ENCODE measurements at regions of chr2 and their contacts with region 1.

Region 1: GRCh38 chr2:186589612-186590349 is at the start of gene ITGAV:
- DNase-seq: peak; percentile 92
- ATAC-seq: peak; percentile 96
- H3K4me3 Mint-ChIP-seq: peak within 1 kb of the TSS; percentile 77
- H3K27ac Mint-ChIP-seq: peak within 1 kb of the TSS; percentile 82
- H3K4me1 Mint-ChIP-seq: peaks cover 31% of the 10 kb centered on the region
- H3K27me3 Mint-ChIP-seq: peaks cover 3% of the 10 kb centered on the region
- total RNA-seq, gene ITGAV: 5.1 to 6.0 TPM

Region 2: DNA sequence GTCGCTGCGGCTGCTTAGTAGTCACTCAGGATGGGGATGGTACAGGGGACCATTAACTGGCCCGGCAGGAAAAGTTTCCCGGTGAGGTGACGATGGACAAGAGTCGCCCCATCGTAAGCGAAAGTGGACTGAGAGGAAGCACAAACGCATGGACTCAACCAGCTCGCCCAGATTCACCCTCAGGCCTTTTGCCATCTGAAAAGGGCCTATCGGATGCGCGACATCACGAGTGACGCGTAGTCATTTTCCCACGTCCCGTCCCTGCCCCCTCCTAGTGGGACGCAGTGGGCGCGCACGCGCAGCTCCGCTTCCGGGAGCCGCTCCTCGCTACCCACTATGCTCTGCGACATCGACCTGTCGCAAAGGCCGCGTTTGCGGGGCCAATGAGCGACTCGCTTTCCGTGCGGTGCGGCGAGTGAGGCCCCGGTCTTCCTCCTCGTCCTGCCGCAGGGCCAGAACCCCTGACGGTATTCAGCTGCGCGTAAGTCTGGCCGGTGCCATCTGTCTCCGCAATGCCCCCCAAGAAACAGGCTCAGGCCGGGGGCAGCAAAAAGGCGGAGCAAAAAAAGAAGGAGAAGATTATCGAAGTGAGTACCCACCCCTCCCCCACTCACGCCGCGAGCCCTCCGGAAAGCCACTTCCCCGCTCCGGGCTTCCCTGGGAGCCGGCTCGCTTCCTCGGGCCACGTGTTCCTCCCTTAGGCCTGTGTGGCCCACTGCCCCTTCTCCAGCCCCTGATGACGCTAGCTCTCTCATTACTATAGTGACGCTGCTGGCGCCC is 103.7 kb before region 1 on chr2 and contains the start of gene ZC3H15:
- CTCF ChIA-PET with region 1: no interaction called
- POLR2A ChIA-PET with region 1: interaction called, 5 read pairs
- intact Hi-C with region 1: loop called (anchors 1 kb)
- DNase-seq: peak; percentile 98
- ATAC-seq: peak; percentile 93
- H3K4me3 Mint-ChIP-seq: peak within 1 kb of the TSS; percentile 99
- H3K27ac Mint-ChIP-seq: peak within 1 kb of the TSS; percentile 99
- H3K4me1 Mint-ChIP-seq: peaks cover 58% of the 10 kb centered on the region
- H3K27me3 Mint-ChIP-seq: no peaks in the 10 kb centered on the region
- total RNA-seq, gene ZC3H15: 100 to 115 TPM

Region 3: GRCh38 chr2:186503848-186504606 is 85.8 kb before region 1 on chr2:
- CTCF ChIA-PET with region 1: interaction called, 7 read pairs
- POLR2A ChIA-PET with region 1: no interaction called
- intact Hi-C with region 1: loop called (anchors 5 kb)
- DNase-seq: no peak
- ATAC-seq: peak; percentile 44
- H3K4me3 Mint-ChIP-seq: no peak overlapping the region
- H3K27ac Mint-ChIP-seq: no peak overlapping the region
- H3K4me1 Mint-ChIP-seq: peaks cover 10% of the 10 kb centered on the region
- H3K27me3 Mint-ChIP-seq: no peaks in the 10 kb centered on the region

Region 4: DNA sequence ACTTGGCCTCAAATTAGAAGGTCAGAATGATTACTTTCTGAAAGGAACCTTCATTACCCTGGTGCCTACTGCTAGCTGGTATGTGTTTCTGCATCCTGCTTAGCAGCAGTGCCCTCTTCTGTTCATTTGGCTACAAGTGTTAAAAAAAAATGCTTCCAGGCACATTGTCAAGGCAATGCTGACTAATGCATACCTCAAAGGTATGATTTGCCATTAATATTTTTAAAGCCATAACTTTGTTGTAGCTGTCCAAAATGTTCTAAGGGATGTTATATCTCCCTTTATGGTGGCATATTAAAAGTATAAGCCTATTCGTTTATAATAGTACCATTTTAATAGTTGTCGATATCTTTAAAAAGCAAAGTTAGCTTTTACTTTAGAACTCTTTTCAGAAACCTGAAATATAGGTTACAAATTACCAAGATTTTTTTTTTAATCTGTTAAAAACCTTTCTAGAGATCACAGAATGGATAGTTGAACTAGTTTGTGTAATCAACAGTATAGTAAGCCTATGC is 52.1 kb after region 1 on chr2:
- CTCF ChIA-PET with region 1: interaction called, 12 read pairs
- POLR2A ChIA-PET with region 1: interaction called, 3 read pairs
- intact Hi-C with region 1: loop called (anchors 1 to 2 kb)
- DNase-seq: peak; percentile 49
- ATAC-seq: peak; percentile 71
- H3K4me3 Mint-ChIP-seq: no peak overlapping the region
- H3K27ac Mint-ChIP-seq: no peak overlapping the region
- H3K4me1 Mint-ChIP-seq: peaks cover 30% of the 10 kb centered on the region
- H3K27me3 Mint-ChIP-seq: no peaks in the 10 kb centered on the region

Region 5: DNA sequence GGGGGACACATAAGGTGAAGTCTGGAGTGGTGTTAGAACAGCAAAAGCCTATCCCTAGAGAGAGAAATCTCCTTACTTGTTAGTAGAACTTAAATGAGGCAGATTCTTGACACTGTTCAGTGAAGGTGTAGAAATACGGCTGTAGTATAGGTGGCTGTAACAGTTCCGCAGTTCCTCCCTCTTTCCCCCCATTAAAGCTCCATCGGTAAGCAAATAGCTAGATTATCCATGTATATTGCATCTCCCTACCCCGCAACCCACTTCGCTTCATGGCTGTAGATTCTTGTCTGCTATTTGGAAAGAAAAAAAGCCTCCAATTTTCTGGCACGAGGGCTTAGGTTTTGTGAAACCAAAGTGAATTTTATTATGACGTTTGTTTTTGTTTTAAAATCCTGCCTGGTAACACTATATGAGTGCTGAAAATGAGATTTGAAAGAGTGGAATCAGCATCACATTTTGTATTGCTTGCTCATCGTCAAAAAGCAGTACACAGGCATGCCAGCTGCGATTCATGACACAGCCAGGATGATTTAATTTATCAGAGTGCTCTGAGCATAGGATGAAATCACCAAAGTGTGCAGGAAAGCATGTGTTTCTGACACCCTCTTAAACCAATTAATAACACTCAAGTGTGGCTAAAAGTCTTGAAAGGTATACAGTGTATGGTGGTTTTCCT is 105.4 kb after region 1 on chr2:
- CTCF ChIA-PET with region 1: interaction called, 3 read pairs
- POLR2A ChIA-PET with region 1: no interaction called
- intact Hi-C with region 1: loop called in 1 of 2 experiments (anchors 2 kb)
- DNase-seq: peak; percentile 14
- ATAC-seq: peak; percentile 48
- H3K4me3 Mint-ChIP-seq: peak overlapping the region; percentile 63
- H3K27ac Mint-ChIP-seq: no peak overlapping the region
- H3K4me1 Mint-ChIP-seq: peaks cover 11% of the 10 kb centered on the region
- H3K27me3 Mint-ChIP-seq: peaks cover 41% of the 10 kb centered on the region

Region 6: GRCh38 chr2:186734957-186735734 is 145.4 kb after region 1 on chr2:
- CTCF ChIA-PET with region 1: no interaction called
- POLR2A ChIA-PET with region 1: no interaction called
- intact Hi-C with region 1: no loop called
- DNase-seq: no peak
- ATAC-seq: no peak
- H3K4me3 Mint-ChIP-seq: no peak overlapping the region
- H3K27ac Mint-ChIP-seq: no peak overlapping the region
- H3K4me1 Mint-ChIP-seq: no peaks in the 10 kb centered on the region
- H3K27me3 Mint-ChIP-seq: no peaks in the 10 kb centered on the region

Measured in activated CD4-positive, alpha-beta T cell treated with anti-CD3 and anti-CD28 coated beads for 36 hours (primary cell).